K562 (cell line): ENCODE measurements at regions of chrX and their contacts with region 1.

Region 1: DNA sequence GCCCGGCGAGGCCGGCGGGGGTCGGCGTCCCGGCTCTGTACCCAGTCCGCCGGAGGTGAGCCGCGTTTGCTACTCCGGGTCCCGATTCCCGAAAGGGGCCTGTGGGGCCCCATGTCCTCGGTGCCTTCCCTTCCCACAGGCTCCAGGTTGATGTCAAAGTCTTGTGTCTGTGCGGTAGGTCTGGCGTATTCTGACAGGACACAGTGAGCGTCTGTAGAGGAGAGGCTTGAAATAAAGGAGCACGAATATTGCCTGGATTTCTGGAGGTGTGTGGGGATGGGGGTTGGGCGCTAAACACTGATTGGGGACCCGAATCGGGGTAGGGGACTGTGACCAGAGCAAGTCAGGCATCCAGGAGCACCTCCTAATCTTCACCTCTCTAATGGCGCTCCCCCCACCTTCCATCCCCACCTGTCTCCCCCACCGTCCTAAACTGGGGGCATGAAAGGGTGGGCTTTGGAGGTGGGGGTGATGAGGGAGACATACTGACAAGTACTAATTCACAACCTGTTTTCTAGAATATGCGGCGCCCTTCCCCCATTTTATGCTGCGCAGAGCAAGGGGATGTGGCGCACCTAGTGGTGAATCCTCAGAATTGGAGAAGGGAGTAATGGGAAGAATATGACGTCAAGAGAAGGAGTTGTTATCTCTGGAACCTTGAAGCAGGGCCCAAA is 841 bp downstream of the GPRASP2 start:
- DNase-seq: peak; percentile 26 to 55 (median 36)
- ATAC-seq: peak; percentile 85
- H3K4me3 ChIP-seq: peak overlapping the region; percentile 51
- H3K27ac ChIP-seq: no peak overlapping the region; the same call in 2 of the 3 replicates
- H3K4me1 ChIP-seq: peaks cover 3 to 14% of the 10 kb centered on the region in 2 experiments; a peak in 4 of 5 replicates
- H3K27me3 ChIP-seq: 0 out of 5 replicates have a peak, but pooled peaks cover 0 to 4% of the 10 kb centered on the region in 2 experiments
- CTCF ChIP-seq: peak; percentile 50 to 70 (median 58); a peak in 5 of 6 replicates
- EP300 ChIP-seq: no peak
- POLR2A ChIP-seq: no peak
- RAD21 ChIP-seq: peak in 1 of 2 experiments; percentile 43; a peak in 2 of 4 replicates

Region 2: DNA sequence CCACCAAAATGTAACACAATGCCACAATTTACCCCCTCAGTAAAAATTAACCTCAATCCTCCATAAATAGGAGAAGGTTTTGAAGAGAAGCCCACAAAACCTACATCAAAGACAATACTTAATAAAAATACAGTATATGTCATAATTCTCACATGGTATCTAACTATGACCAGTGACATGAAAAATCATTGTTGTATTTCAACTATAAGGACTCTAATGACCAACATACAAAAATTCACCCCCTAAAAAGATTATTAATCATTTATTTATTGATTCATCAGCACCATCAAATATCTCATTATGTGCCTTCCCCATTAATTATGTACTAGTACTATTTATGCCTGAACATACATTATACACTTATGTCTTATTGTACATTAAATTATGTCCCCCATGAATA is 704.2 kb before region 1 on chrX:
- CTCF ChIA-PET with region 1: no interaction called
- POLR2A ChIA-PET with region 1: no interaction called
- in situ Hi-C with region 1: no loop called
- intact Hi-C with region 1: no loop called
- DNase-seq: no peak
- ATAC-seq: no peak
- H3K4me3 ChIP-seq: no peak overlapping the region
- H3K27ac ChIP-seq: no peak overlapping the region
- H3K4me1 ChIP-seq: no peaks in the 10 kb centered on the region
- H3K27me3 ChIP-seq: no peaks in the 10 kb centered on the region
- CTCF ChIP-seq: no peak
- EP300 ChIP-seq: no peak
- POLR2A ChIP-seq: no peak
- RAD21 ChIP-seq: no peak

Region 3: DNA sequence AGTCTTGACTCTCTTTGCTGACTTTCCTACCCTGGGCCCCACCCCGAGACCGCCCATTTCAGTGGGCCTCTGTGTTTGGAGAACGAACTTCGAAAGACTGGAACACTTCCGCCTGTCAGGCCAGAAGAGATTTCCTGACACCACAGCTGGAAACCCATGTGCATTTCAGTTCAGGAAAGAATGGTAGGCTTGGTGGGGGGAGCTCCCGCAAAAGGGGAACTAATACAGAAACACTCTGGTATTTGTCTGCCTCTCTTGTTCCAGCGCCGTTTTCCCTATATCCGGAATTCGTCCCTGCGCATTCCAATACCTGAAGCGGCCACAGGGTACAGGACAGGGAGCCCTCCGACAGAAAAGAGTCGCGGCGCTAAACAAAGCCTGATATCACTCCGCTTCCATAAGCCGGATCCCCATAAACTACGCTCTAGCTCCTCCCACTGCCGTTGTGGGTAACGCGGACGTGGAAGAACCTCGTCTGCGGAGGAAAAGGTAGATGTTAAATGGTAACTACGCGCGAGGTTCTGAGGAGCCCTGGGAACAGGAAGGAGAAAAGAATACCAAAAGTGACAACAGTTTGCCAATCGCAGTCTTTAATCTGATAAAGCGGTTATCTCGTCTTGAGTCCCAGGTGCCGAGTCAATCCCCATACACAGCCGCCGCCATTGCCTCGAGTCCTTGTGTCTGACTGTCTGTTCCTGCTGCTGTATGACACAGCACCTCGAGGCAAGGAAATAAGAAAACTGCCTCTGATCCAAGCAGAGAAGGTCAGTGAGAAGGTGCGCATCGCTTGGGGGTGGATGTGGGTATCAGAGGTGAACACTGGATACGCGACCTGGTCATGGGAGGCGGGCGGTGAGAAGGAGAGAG is 113.8 kb before region 1 on chrX and contains the start of gene ARMCX5:
- CTCF ChIA-PET with region 1: no interaction called
- POLR2A ChIA-PET with region 1: no interaction called
- in situ Hi-C with region 1: no loop called
- intact Hi-C with region 1: loop called (anchors 10 kb)
- DNase-seq: peak; percentile 64 to 82 (median 68)
- ATAC-seq: peak; percentile 93
- H3K4me3 ChIP-seq: peak within 1 kb of the TSS; percentile 50
- H3K27ac ChIP-seq: peak within 1 kb of the TSS; percentile 69
- H3K4me1 ChIP-seq: no peaks in the 10 kb centered on the region
- H3K27me3 ChIP-seq: no peaks in the 10 kb centered on the region
- CTCF ChIP-seq: no peak
- EP300 ChIP-seq: no peak
- POLR2A ChIP-seq: peak; percentile 83
- RAD21 ChIP-seq: no peak
- polyA plus RNA-seq, gene ARMCX5: 17.3 to 29.4 TPM

Region 4: DNA sequence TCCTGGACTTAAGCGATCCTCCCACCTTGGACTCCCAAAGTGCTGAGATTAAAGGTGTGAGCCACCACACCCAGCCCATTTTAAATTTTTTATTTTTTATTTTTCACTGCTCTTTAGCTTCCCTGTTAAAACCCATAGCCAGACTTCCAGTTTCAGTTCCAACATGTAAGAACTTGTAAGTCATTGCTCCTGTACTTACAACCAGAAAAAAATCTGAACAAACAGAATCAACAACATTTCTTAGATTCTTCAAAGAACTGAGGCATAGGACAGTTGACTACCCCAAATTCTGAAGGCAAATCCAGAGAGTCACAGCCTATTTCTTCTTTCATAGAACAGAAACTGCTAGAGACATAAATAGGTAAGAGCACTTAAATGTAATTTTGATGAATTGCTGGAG is 15.6 kb after region 1 on chrX:
- CTCF ChIA-PET with region 1: no interaction called
- POLR2A ChIA-PET with region 1: no interaction called
- in situ Hi-C with region 1: no loop called
- intact Hi-C with region 1: no loop called
- DNase-seq: no peak
- ATAC-seq: no peak
- H3K4me3 ChIP-seq: no peak overlapping the region
- H3K27ac ChIP-seq: no peak overlapping the region
- H3K4me1 ChIP-seq: no peaks in the 10 kb centered on the region
- H3K27me3 ChIP-seq: no peaks in the 10 kb centered on the region
- CTCF ChIP-seq: no peak
- EP300 ChIP-seq: no peak
- POLR2A ChIP-seq: no peak
- RAD21 ChIP-seq: no peak

Region 5: DNA sequence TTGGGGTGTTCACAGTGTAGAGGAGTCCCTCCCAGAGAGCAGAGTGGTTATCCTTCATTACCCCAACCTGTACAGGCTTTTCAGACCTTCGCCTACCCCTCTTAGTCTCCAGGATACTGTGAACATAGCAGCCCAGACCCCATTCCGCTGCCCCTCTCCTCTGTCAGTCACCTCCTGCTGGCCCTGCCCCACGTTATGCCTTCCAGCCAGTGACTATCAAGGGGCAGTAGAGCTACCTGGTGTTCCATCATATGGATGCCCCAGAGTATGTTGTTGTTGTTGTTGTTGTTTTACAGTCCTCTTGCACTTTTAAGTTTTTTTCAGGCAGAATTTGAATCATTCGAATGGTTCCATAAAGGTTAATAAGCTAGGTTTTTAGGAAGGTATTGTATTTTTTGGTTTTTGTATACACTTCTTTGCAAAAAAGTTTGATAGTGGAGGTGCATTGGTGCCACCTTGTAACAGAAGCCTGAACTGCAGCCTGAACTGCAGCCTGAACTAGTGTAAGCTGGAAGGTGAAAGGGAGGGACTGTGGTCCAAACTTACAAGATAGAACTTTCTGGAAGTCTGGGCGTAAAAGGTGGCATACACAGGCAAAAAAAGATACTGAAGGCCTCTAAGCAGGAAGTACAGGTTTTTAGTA is 122.5 kb after region 1 on chrX:
- CTCF ChIA-PET with region 1: no interaction called
- POLR2A ChIA-PET with region 1: no interaction called
- in situ Hi-C with region 1: no loop called
- intact Hi-C with region 1: loop called (anchors 10 kb)
- DNase-seq: peak in 3 of 4 experiments; percentile 11 to 23 (median 12)
- ATAC-seq: peak; percentile 74
- H3K4me3 ChIP-seq: no peak overlapping the region
- H3K27ac ChIP-seq: no peak overlapping the region
- H3K4me1 ChIP-seq: peaks cover 0 to 3% of the 10 kb centered on the region in 2 experiments; a peak in 2 of 5 replicates
- H3K27me3 ChIP-seq: no peaks in the 10 kb centered on the region
- CTCF ChIP-seq: peak; percentile 27 to 48 (median 47); a peak in 4 of 6 replicates
- EP300 ChIP-seq: no peak
- POLR2A ChIP-seq: no peak
- RAD21 ChIP-seq: peak; percentile 25 to 53; a peak in 2 of 4 replicates

Region 6: GRCh38 chrX:102863735-102864134 is 150.6 kb after region 1 on chrX:
- CTCF ChIA-PET with region 1: no interaction called
- POLR2A ChIA-PET with region 1: no interaction called
- in situ Hi-C with region 1: no loop called
- intact Hi-C with region 1: loop called (anchors 10 kb)
- DNase-seq: peak; percentile 61 to 85 (median 73)
- ATAC-seq: peak; percentile 97
- H3K4me3 ChIP-seq: no peak overlapping the region
- H3K27ac ChIP-seq: no peak overlapping the region
- H3K4me1 ChIP-seq: no peaks in the 10 kb centered on the region
- H3K27me3 ChIP-seq: no peaks in the 10 kb centered on the region
- CTCF ChIP-seq: peak; percentile 70 to 87 (median 83)
- EP300 ChIP-seq: no peak
- POLR2A ChIP-seq: no peak
- RAD21 ChIP-seq: peak; percentile 68 to 70